Sciatic nerve (tissue), 2 donors: ENCODE measurements at regions of chr16 and their contacts with region 1.

Region 1: GRCh38 chr16:4957720-4958509 is at the start of gene SEC14L5:
- DNase-seq: peak; percentile 99
- ATAC-seq: peak; percentile 97
- total RNA-seq, gene SEC14L5: 43.1 TPM

Region 2: GRCh38 chr16:4693296-4693955 is 264.5 kb before region 1 on chr16 and contains the start of gene NUDT16L1:
- intact Hi-C with region 1: loop called (anchors 10 kb)
- DNase-seq: peak; percentile 97
- ATAC-seq: peak; percentile 89
- total RNA-seq, gene NUDT16L1: 21.3 TPM

Region 3: DNA sequence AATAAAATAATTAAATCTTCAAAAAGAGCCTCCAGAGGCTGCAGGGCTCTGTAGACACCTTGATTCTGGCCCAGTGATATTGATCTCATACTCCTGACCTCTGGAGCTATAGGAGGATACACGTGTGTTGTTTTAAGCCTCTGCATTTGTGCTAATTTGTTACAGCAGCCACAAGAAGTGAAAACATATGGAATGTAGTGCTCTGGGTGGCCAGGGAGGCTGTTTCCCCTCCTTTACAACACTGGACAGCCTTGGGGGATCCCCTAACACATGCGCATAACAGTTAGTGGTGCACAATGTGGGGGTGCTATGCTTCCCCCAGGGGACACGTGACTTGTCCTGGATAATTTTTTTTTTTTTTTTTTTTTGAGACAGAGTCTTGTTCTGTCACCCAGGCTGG is 186.3 kb before region 1 on chr16:
- intact Hi-C with region 1: loop called (anchors 5 kb)
- DNase-seq: no peak
- ATAC-seq: no peak

Region 4: GRCh38 chr16:4994719-4995434 is 37.0 kb after region 1 on chr16:
- intact Hi-C with region 1: no loop called
- DNase-seq: peak; percentile 77
- ATAC-seq: peak; percentile 83

Region 5: DNA sequence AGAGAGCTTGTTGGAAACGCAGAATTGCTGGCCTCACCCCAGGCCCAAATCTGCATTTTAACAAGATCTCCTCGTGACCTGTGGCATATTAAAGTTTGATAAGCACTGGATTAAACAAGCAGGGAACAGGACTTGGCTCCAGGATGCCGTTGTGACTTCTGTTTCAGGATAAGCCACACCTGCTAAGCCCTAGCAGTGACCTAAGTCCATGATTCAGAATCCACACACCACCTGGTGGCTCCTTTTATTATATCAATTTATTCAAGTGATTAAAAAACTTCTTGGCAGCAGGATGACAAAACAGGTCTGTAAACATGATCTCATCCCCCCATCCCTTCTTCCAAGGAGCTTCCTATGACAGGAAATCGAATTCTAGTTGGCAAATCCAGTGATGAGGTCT is 66.7 kb after region 1 on chr16:
- intact Hi-C with region 1: loop called (anchors 5 kb)
- DNase-seq: no peak
- ATAC-seq: no peak